HepG2 (cell line): ENCODE measurements at regions of chr20 and their contacts with region 1.

Region 1: GRCh38 chr20:24089576-24089975 is 101.0 kb upstream of the GGTLC1 start:
- DNase-seq: no peak
- ATAC-seq: no peak
- H3K4me3 ChIP-seq: no peak overlapping the region
- H3K27ac ChIP-seq: no peak overlapping the region
- H3K4me1 ChIP-seq: no peaks in the 10 kb centered on the region
- H3K27me3 ChIP-seq: no peaks in the 10 kb centered on the region
- CTCF ChIP-seq: no peak
- EP300 ChIP-seq: no peak
- POLR2A ChIP-seq: no peak
- RAD21 ChIP-seq: no peak

Region 2: GRCh38 chr20:23995905-23996666 is 93.5 kb before region 1 on chr20:
- CTCF ChIA-PET with region 1: no interaction called
- POLR2A ChIA-PET with region 1: no interaction called
- in situ Hi-C with region 1: no loop called
- intact Hi-C with region 1: no loop called
- DNase-seq: peak; percentile 50
- ATAC-seq: peak; percentile 49; the same call in 2 of the 3 replicates
- H3K4me3 ChIP-seq: no peak overlapping the region
- H3K27ac ChIP-seq: no peak overlapping the region
- H3K4me1 ChIP-seq: no peaks in the 10 kb centered on the region
- H3K27me3 ChIP-seq: no peaks in the 10 kb centered on the region
- CTCF ChIP-seq: peak; percentile 64
- EP300 ChIP-seq: no peak
- POLR2A ChIP-seq: no peak
- RAD21 ChIP-seq: peak; percentile 45; the same call in 1 of the 2 replicates

Region 3: GRCh38 chr20:24027229-24027628 is 62.3 kb before region 1 on chr20:
- CTCF ChIA-PET with region 1: no interaction called
- POLR2A ChIA-PET with region 1: no interaction called
- in situ Hi-C with region 1: no loop called
- intact Hi-C with region 1: loop called (anchors 2 kb)
- DNase-seq: no peak
- ATAC-seq: no peak
- H3K4me3 ChIP-seq: no peak overlapping the region
- H3K27ac ChIP-seq: no peak overlapping the region
- H3K4me1 ChIP-seq: no peaks in the 10 kb centered on the region
- H3K27me3 ChIP-seq: no peaks in the 10 kb centered on the region
- CTCF ChIP-seq: no peak
- EP300 ChIP-seq: no peak
- POLR2A ChIP-seq: no peak
- RAD21 ChIP-seq: no peak

Region 4: GRCh38 chr20:24235296-24236175 is 146.0 kb after region 1 on chr20:
- CTCF ChIA-PET with region 1: no interaction called
- POLR2A ChIA-PET with region 1: no interaction called
- in situ Hi-C with region 1: no loop called
- intact Hi-C with region 1: no loop called
- DNase-seq: no peak
- ATAC-seq: no peak
- H3K4me3 ChIP-seq: no peak overlapping the region
- H3K27ac ChIP-seq: no peak overlapping the region
- H3K4me1 ChIP-seq: no peaks in the 10 kb centered on the region
- H3K27me3 ChIP-seq: 0 out of 5 replicates have a peak, but pooled peaks cover 0 to 4% of the 10 kb centered on the region in 2 experiments
- CTCF ChIP-seq: no peak
- EP300 ChIP-seq: no peak
- POLR2A ChIP-seq: no peak
- RAD21 ChIP-seq: no peak